Mammary epithelial cell (primary cell): ENCODE measurements at regions of chr18 and their contacts with region 1.

Region 1: GRCh38 chr18:9643549-9643948 is 29.2 kb upstream of the PPP4R1 start:
- DNase-seq: peak; percentile 92
- H3K4me3 ChIP-seq: peak overlapping the region in 1 of 3 experiments; percentile 17
- H3K27ac ChIP-seq: peak overlapping the region; percentile 100
- H3K4me1 ChIP-seq: peaks cover 41% of the 10 kb centered on the region
- H3K27me3 ChIP-seq: no peaks in the 10 kb centered on the region
- CTCF ChIP-seq: no peak

Region 2: DNA sequence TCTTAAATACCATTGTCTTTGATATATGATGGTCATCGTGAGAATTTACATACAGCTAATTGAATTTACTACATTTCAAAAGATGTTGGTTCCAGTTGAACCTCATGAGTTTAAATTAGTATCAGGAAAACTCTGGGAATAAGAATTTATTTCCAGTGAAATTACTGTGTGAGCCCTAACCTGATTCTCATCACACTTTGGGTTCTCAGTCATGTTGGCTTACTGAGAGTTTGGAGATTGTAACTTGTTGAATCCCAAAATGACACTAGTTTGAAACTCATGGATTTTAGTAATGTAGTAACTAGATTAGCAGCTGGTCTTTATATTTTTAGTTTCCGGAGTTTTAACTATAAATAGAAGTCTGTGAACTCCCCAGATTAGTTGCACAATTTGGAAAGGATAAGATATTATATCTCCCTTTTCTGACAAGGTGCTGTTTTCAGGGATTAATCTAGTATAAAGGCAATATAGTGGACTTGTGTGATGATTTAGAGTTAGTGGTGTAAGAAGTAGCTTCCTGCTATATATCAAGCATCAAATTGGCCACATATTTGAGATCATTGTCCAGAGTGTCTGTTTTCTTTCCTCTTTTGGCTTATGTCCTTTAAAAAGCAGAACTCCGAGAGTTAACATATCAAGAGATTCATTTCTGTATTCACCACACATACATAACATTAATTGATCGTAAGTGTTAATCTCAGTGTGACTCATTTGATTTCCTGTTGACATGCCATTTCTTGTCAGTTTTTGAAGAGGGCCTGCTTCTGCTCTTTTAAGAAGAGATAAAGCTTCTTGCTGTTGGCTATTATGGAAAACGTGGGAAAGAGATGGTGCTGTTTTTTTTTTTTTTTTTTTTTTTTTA is 525.3 kb before region 1 on chr18:
- CTCF ChIA-PET with region 1: no interaction called
- dilution Hi-C with region 1: no loop called
- in situ Hi-C with region 1: no loop called
- intact Hi-C with region 1: no loop called
- DNase-seq: peak; percentile 52
- H3K4me3 ChIP-seq: peak overlapping the region in 1 of 3 experiments; percentile 31
- H3K27ac ChIP-seq: peak overlapping the region; percentile 70
- H3K4me1 ChIP-seq: peaks cover 30% of the 10 kb centered on the region
- H3K27me3 ChIP-seq: no peaks in the 10 kb centered on the region
- CTCF ChIP-seq: no peak

Region 3: DNA sequence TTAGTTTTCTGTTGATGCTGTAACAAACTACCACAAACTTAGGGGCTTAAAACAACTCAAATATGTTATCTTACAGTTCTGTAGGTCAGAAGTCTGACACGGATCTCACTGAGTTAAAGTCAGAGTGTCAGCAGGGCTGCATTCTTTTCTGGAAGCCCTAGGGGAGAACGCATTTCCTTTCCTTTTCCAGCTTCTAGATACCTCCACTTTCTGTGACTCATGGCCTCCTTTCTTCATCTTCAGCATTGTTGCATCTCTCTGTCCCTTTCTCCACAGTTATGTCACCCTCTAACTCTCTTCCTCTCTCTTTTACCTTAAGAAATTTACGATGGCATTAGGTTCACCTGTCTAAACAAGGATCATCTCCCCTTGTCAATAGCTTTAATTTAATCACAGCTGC is 15.9 kb before region 1 on chr18:
- CTCF ChIA-PET with region 1: no interaction called
- dilution Hi-C with region 1: no loop called
- in situ Hi-C with region 1: no loop called
- intact Hi-C with region 1: loop called (anchors 1 kb)
- DNase-seq: peak; percentile 70
- H3K4me3 ChIP-seq: no peak overlapping the region
- H3K27ac ChIP-seq: peak overlapping the region; percentile 66
- H3K4me1 ChIP-seq: peaks cover 18% of the 10 kb centered on the region
- H3K27me3 ChIP-seq: no peaks in the 10 kb centered on the region
- CTCF ChIP-seq: no peak